Posterior cingulate gyrus (tissue), 11 donors: ENCODE measurements at regions of chr5 and their contacts with region 1.

Region 1: GRCh38 chr5:81301271-81302015 is at the start of gene ZCCHC9:
- DNase-seq: peak; percentile 88 to 99 (median 92)

Region 2: GRCh38 chr5:81235287-81236072 is 66.0 kb before region 1 on chr5:
- intact Hi-C with region 1: loop called (anchors 5 kb)
- DNase-seq: no peak